ENCODE measurements at regions of chr5 and their contacts with region 1.

Region 1: GRCh38 chr5:170434966-170435605 is 45.9 kb upstream of the KCNMB1 start:
- DNase-seq: peak; percentile 43 to 70
- ATAC-seq: peak; percentile 77 to 88 (median 87)
- H3K4me3 ChIP-seq: no peak overlapping the region
- H3K27ac ChIP-seq: no peak overlapping the region
- H3K4me1 ChIP-seq: no peaks in the 10 kb centered on the region
- H3K27me3 ChIP-seq: peaks cover 0 to 10% (median 0%) of the 10 kb centered on the region in 7 donors
- CTCF ChIP-seq: peak; percentile 95 to 99 (median 98)

Region 2: GRCh38 chr5:170491479-170491878 is 56.4 kb after region 1 on chr5:
- intact Hi-C with region 1: no loop called
- DNase-seq: peak in 1 of 2 donors; percentile 23
- ATAC-seq: peak; percentile 55 to 83 (median 72)
- H3K4me3 ChIP-seq: no peak overlapping the region
- H3K27ac ChIP-seq: peak overlapping the region in 6 of 10 donors; percentile 29 to 74 (median 48)
- H3K4me1 ChIP-seq: peaks cover 0 to 27% (median 13%) of the 10 kb centered on the region in 9 donors
- H3K27me3 ChIP-seq: no peaks in the 10 kb centered on the region
- CTCF ChIP-seq: no peak

Region 3: GRCh38 chr5:170623576-170624181 is 188.6 kb after region 1 on chr5:
- intact Hi-C with region 1: loop called in 5 of 10 experiments (anchors 1 to 5 kb)
- DNase-seq: peak in 1 of 2 donors; percentile 42
- ATAC-seq: peak in 5 of 8 donors; percentile 55 to 69 (median 61)
- H3K4me3 ChIP-seq: no peak overlapping the region
- H3K27ac ChIP-seq: no peak overlapping the region
- H3K4me1 ChIP-seq: no peaks in the 10 kb centered on the region
- H3K27me3 ChIP-seq: no peaks in the 10 kb centered on the region
- CTCF ChIP-seq: peak; percentile 8 to 71 (median 63)

Region 4: GRCh38 chr5:170633235-170634081 is 198.4 kb after region 1 on chr5:
- intact Hi-C with region 1: loop called in 9 of 10 experiments (anchors 1 to 5 kb)
- DNase-seq: peak; percentile 39 to 80
- ATAC-seq: peak; percentile 66 to 84 (median 80)
- H3K4me3 ChIP-seq: peak overlapping the region in 9 of 10 donors; percentile 18 to 47 (median 34)
- H3K27ac ChIP-seq: peak overlapping the region; percentile 40 to 83 (median 72)
- H3K4me1 ChIP-seq: peaks cover 2 to 44% (median 30%) of the 10 kb centered on the region in 9 donors
- H3K27me3 ChIP-seq: no peaks in the 10 kb centered on the region
- CTCF ChIP-seq: peak in 3 of 9 donors; percentile 4 to 26 (median 13)